PC-3 (cell line): ENCODE measurements at regions of chr1 and their contacts with region 1.

Region 1: GRCh38 chr1:31127266-31127665 is 61.7 kb upstream of the PUM1 start:
- DNase-seq: no peak
- ATAC-seq: no peak
- H3K4me3 ChIP-seq: no peak overlapping the region
- H3K27ac ChIP-seq: no peak overlapping the region
- H3K4me1 ChIP-seq: no peaks in the 10 kb centered on the region
- H3K27me3 ChIP-seq: no peaks in the 10 kb centered on the region
- CTCF ChIP-seq: no peak

Region 2: GRCh38 chr1:31084782-31085569 is 42.3 kb before region 1 on chr1:
- CTCF ChIA-PET with region 1: no interaction called
- POLR2A ChIA-PET with region 1: interaction called, 16 read pairs
- intact Hi-C with region 1: no loop called
- DNase-seq: no peak
- ATAC-seq: no peak
- H3K4me3 ChIP-seq: no peak overlapping the region
- H3K27ac ChIP-seq: no peak overlapping the region
- H3K4me1 ChIP-seq: no peaks in the 10 kb centered on the region
- H3K27me3 ChIP-seq: no peaks in the 10 kb centered on the region
- CTCF ChIP-seq: no peak

Region 3: DNA sequence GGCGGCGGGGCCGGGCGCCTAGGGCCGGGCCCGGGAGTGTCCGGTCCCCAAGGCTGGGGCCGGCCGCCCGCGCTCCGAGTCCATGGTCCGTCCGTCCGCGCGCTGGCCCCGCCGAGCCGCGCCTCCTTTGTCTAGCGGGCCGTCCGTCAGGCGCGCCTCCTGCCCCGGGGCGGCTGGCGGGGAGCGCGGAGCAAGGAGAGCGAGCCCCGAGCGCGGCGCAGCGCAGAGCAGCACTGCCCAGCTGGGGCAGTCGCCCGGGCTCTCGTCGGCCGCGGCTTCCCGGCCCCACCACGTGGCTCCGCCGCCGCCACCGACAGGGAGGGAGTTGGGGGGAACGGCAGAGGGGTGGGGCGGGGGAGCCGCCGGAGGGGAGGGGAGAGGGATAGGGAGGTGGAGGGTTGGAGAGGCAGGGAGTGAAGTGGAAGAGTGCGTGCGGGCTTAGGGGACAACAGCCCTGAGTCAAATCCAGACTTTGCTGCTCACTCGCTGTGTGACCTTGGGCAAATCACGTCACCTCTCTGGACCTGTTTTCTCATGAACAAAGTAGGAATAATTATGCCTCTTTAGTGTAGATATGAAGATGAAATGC is 112.5 kb after region 1 on chr1 and contains the start of gene NKAIN1:
- CTCF ChIA-PET with region 1: no interaction called
- POLR2A ChIA-PET with region 1: no interaction called
- intact Hi-C with region 1: no loop called
- DNase-seq: peak; percentile 22
- ATAC-seq: peak; percentile 70
- H3K4me3 ChIP-seq: peak within 1 kb of the TSS; percentile 44
- H3K27ac ChIP-seq: no peak within 1 kb of the TSS
- H3K4me1 ChIP-seq: no peaks in the 10 kb centered on the region
- H3K27me3 ChIP-seq: peaks cover 32% of the 10 kb centered on the region
- CTCF ChIP-seq: no peak
- total RNA-seq, gene NKAIN1: 0.18 and 0.75 TPM in 2 replicates